CD4-positive, alpha-beta memory T cell (primary cell): ENCODE measurements at regions of chr15 and their contacts with region 1.

Region 1: DNA sequence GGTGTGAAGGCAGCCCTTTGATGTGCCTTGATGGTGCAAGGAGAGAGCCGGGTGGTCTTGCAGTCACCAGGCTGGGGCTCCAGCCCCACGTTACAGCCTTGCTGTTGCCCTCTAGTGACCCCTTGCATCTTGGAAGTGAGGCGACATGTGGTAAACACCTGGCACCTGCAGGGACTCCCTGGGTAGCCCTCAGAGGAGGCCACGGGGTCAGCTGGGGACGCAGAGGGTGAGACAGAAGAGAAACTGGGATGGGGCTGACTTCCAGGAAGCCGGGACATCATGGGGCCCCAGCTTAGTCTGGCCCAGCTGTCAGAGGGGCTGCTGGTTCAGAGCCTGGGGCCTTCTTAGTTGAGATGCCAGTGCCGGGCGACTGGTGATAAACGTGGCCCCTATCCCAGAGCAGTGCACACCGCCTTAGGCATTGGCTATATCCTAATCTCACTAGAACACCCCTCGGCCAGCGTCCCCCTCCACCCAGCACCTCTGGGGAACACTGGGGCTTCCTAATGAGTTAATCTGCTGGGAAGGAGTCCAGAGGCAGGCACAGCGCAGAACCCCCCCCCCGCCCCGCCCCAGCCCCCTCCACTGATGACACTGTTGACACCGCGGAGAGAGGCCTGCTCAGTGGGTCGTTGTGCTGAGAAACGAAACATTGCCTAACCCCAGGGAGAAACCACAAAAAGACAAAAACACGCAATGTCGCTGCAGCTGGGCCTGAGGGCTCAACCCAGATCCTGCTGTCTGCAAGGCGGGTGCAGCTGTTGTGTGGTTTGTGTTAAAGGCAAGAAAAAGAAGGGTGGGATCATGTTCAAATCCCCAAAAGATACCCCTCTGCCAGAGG is 60.5 kb upstream of the KLF13 start:
- DNase-seq: peak; percentile 76 to 84 (median 80)
- H3K4me3 ChIP-seq: peak overlapping the region in 1 of 2 donors; percentile 20
- H3K4me3 Mint-ChIP-seq: peak overlapping the region; percentile 1 to 86 (median 78)
- H3K27ac ChIP-seq: peak overlapping the region; percentile 70
- H3K27ac Mint-ChIP-seq: peak overlapping the region; percentile 70 to 99 (median 96)
- H3K4me1 ChIP-seq: peaks cover 75% of the 10 kb centered on the region
- H3K4me1 Mint-ChIP-seq: peaks cover 62 to 83% (median 74%) of the 10 kb centered on the region in 4 donors
- H3K27me3 ChIP-seq: no peaks in the 10 kb centered on the region
- H3K27me3 Mint-ChIP-seq: no peaks in the 10 kb centered on the region

Region 2: GRCh38 chr15:31004220-31004733 is 261.8 kb before region 1 on chr15:
- CTCF ChIA-PET with region 1: no interaction called
- POLR2A ChIA-PET with region 1: no interaction called
- intact Hi-C with region 1: no loop called
- DNase-seq: no peak
- H3K4me3 ChIP-seq: no peak overlapping the region
- H3K4me3 Mint-ChIP-seq: peak overlapping the region in 3 of 8 donors; percentile 0 to 18 (median 1)
- H3K27ac ChIP-seq: no peak overlapping the region
- H3K27ac Mint-ChIP-seq: peak overlapping the region in 1 of 7 donors; percentile 36
- H3K4me1 ChIP-seq: peaks cover 5% of the 10 kb centered on the region
- H3K4me1 Mint-ChIP-seq: peaks cover 5 to 6% (median 6%) of the 10 kb centered on the region in 4 donors
- H3K27me3 ChIP-seq: no peaks in the 10 kb centered on the region
- H3K27me3 Mint-ChIP-seq: peaks cover 14 to 20% of the 10 kb centered on the region in 2 donors

Region 3: GRCh38 chr15:31062310-31062847 is 203.7 kb before region 1 on chr15:
- CTCF ChIA-PET with region 1: no interaction called
- POLR2A ChIA-PET with region 1: no interaction called
- intact Hi-C with region 1: no loop called
- DNase-seq: no peak
- H3K4me3 ChIP-seq: no peak overlapping the region
- H3K4me3 Mint-ChIP-seq: no peak overlapping the region
- H3K27ac ChIP-seq: no peak overlapping the region
- H3K27ac Mint-ChIP-seq: no peak overlapping the region
- H3K4me1 ChIP-seq: no peaks in the 10 kb centered on the region
- H3K4me1 Mint-ChIP-seq: no peaks in the 10 kb centered on the region
- H3K27me3 ChIP-seq: no peaks in the 10 kb centered on the region
- H3K27me3 Mint-ChIP-seq: peaks cover 5 to 12% of the 10 kb centered on the region in 2 donors

Region 4: GRCh38 chr15:31206386-31206785 is 59.7 kb before region 1 on chr15:
- CTCF ChIA-PET with region 1: interaction called, 14 read pairs
- POLR2A ChIA-PET with region 1: interaction called, 14 read pairs
- intact Hi-C with region 1: no loop called
- DNase-seq: no peak
- H3K4me3 ChIP-seq: no peak overlapping the region
- H3K4me3 Mint-ChIP-seq: no peak overlapping the region
- H3K27ac ChIP-seq: no peak overlapping the region
- H3K27ac Mint-ChIP-seq: no peak overlapping the region
- H3K4me1 ChIP-seq: peaks cover 36% of the 10 kb centered on the region
- H3K4me1 Mint-ChIP-seq: peaks cover 14 to 34% (median 22%) of the 10 kb centered on the region in 4 donors
- H3K27me3 ChIP-seq: no peaks in the 10 kb centered on the region
- H3K27me3 Mint-ChIP-seq: no peaks in the 10 kb centered on the region

Region 5: GRCh38 chr15:31236184-31237042 is 29.7 kb before region 1 on chr15:
- CTCF ChIA-PET with region 1: interaction called, 4 read pairs
- POLR2A ChIA-PET with region 1: interaction called, 34 read pairs
- intact Hi-C with region 1: no loop called
- DNase-seq: no peak
- H3K4me3 ChIP-seq: no peak overlapping the region
- H3K4me3 Mint-ChIP-seq: no peak overlapping the region
- H3K27ac ChIP-seq: no peak overlapping the region
- H3K27ac Mint-ChIP-seq: no peak overlapping the region
- H3K4me1 ChIP-seq: peaks cover 19% of the 10 kb centered on the region
- H3K4me1 Mint-ChIP-seq: peaks cover 16 to 28% (median 25%) of the 10 kb centered on the region in 4 donors
- H3K27me3 ChIP-seq: no peaks in the 10 kb centered on the region
- H3K27me3 Mint-ChIP-seq: no peaks in the 10 kb centered on the region

Region 6: DNA sequence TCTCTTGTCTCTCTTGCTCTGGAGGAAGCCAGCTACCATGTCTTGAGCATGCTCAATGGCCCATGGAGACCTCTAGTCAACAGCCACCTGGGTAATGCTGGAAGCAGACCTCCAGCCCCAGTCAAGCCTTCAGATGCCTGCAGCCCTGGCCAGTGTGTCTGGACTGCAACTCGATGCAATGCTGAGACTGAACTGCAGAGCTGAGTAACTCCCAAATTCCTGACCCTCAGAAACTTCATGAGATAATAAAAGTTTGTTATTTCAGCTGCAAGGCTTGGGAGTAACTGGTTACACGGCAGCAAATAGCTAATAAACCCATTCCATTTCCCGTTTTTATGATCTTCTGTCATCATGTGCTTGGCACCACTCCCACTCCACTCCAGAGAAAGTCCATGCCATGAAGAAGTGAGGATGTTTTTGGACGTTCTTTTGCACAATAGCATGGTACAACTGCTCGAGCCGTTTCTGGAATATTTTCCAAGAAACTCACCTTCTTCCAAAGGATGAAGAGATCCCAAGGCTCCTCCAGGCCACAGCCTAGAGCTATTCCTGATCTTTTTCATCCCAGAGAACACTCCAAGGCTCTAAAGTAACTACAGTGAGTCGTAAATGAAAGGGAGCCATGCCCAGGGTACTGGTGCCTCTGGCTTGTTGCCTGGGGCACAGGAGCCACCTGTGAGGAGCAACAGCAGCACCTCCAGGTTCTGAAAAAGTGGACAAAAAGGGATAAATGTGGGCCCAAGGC is 11.5 kb before region 1 on chr15:
- CTCF ChIA-PET with region 1: interaction called, 20 read pairs
- POLR2A ChIA-PET with region 1: interaction called, 12 read pairs
- intact Hi-C with region 1: no loop called
- DNase-seq: no peak
- H3K4me3 ChIP-seq: no peak overlapping the region
- H3K4me3 Mint-ChIP-seq: no peak overlapping the region
- H3K27ac ChIP-seq: no peak overlapping the region
- H3K27ac Mint-ChIP-seq: no peak overlapping the region
- H3K4me1 ChIP-seq: no peaks in the 10 kb centered on the region
- H3K4me1 Mint-ChIP-seq: peaks cover 10 to 22% (median 13%) of the 10 kb centered on the region in 4 donors
- H3K27me3 ChIP-seq: no peaks in the 10 kb centered on the region
- H3K27me3 Mint-ChIP-seq: no peaks in the 10 kb centered on the region

Region 7: GRCh38 chr15:31391687-31392671 is 125.9 kb after region 1 on chr15:
- CTCF ChIA-PET with region 1: no interaction called
- POLR2A ChIA-PET with region 1: interaction called, 18 read pairs
- intact Hi-C with region 1: loop called (anchors 5 kb)
- DNase-seq: peak; percentile 78 to 87 (median 79)
- H3K4me3 ChIP-seq: peak overlapping the region; percentile 65 to 77
- H3K4me3 Mint-ChIP-seq: peak overlapping the region; percentile 87 to 96 (median 92)
- H3K27ac ChIP-seq: peak overlapping the region; percentile 57
- H3K27ac Mint-ChIP-seq: peak overlapping the region; percentile 81 to 98 (median 93)
- H3K4me1 ChIP-seq: peaks cover 28% of the 10 kb centered on the region
- H3K4me1 Mint-ChIP-seq: peaks cover 28 to 60% (median 39%) of the 10 kb centered on the region in 4 donors
- H3K27me3 ChIP-seq: no peaks in the 10 kb centered on the region
- H3K27me3 Mint-ChIP-seq: no peaks in the 10 kb centered on the region

Region 8: DNA sequence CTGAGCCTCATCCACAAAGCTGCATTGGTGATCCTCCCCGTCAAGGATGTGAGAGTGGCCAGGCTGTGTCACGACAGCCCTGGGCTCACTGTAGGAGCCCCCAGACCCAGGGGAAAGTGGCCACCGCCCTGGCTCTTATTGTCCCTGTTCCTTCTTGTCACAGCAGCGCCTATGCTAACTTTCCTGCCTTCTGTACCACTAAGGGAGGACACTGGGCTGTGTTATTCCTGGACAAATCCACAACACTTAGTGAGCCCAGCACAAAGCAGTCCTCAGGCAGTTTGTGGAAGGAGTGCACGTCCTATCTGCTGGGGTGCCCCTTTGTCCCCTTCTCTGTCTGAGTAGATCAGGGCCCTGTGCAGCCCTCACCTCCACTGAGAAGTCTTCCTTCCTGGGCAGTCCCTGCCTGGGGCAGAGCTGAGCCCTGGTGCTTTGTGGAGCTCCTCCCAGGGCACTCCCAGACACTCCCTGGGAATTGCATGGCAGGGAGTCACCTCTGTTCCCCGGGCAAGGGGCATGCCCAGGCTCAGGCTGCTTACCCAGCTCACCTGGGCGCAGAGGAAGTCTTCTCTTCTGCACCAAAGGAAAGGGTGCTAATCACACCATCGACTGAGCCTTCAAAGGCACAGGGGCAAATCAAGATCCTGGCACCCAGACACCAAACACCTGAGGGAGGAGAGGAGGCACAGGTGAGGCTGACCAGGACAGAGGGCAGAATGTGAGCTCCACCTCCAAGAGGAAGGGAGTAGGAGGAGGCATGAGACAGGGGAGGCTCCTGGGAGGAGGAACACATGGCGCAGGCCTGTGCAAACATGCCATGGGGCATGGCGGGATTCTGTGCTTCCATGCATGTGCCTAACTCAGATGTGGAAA is 199.2 kb after region 1 on chr15:
- CTCF ChIA-PET with region 1: no interaction called
- POLR2A ChIA-PET with region 1: no interaction called
- intact Hi-C with region 1: no loop called
- DNase-seq: no peak
- H3K4me3 ChIP-seq: no peak overlapping the region
- H3K4me3 Mint-ChIP-seq: no peak overlapping the region
- H3K27ac ChIP-seq: no peak overlapping the region
- H3K27ac Mint-ChIP-seq: peak overlapping the region in 1 of 7 donors; percentile 14
- H3K4me1 ChIP-seq: no peaks in the 10 kb centered on the region
- H3K4me1 Mint-ChIP-seq: peaks cover 1 to 5% (median 2%) of the 10 kb centered on the region in 4 donors
- H3K27me3 ChIP-seq: no peaks in the 10 kb centered on the region
- H3K27me3 Mint-ChIP-seq: no peaks in the 10 kb centered on the region